ENCODE measurements at regions of chr14 and their contacts with region 1.

Region 1: DNA sequence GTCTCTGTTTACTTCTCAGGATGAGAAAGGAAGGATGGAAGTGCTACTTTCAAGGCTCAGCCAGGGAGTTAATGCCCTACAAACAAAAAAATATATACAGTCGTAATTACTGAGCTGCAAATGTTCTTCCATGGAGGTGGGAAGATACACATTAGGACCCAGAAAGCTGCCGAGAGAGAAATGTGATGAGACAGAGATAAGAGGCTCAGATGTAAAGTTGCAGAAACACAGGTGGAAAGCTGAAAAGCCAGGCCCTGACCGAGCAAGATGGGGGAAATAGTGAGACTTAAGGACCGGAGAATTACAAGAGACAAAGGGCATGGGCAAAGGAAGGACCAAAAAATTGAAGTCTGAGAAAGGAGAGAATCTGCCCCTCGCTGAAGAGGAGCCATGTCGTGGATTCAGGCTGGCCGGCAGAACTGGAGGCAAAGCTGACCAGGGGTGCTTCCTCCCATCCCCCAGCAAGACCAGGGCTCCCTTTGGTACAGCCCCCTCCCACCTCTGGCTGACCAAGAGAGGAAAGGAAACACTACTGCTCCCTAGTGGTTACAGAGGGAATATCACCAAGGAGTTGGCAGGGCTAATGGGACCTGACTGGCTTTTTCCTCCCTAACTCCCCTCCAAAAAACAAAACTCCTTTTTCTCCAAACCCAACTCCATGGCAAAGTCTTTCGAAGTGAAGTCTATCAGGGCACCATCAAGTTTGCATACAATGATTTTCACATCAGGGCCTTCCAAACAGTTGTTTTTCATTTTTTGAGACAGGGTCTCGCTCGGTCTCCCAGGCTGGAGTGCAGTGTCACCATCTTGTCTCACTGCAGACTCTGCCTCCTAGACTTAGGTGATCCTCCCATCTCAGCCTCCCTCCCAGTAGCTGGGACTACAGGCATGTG is 12.1 kb downstream of the ZFHX2 start:
- DNase-seq: no peak
- ATAC-seq: peak; percentile 58 to 75
- H3K4me3 ChIP-seq: no peak overlapping the region
- H3K27ac ChIP-seq: no peak overlapping the region
- H3K4me1 ChIP-seq: no peaks in the 10 kb centered on the region
- H3K27me3 ChIP-seq: no peaks in the 10 kb centered on the region
- CTCF ChIP-seq: peak; percentile 33 to 74 (median 53)
- POLR2A ChIP-seq: no peak

Region 2: DNA sequence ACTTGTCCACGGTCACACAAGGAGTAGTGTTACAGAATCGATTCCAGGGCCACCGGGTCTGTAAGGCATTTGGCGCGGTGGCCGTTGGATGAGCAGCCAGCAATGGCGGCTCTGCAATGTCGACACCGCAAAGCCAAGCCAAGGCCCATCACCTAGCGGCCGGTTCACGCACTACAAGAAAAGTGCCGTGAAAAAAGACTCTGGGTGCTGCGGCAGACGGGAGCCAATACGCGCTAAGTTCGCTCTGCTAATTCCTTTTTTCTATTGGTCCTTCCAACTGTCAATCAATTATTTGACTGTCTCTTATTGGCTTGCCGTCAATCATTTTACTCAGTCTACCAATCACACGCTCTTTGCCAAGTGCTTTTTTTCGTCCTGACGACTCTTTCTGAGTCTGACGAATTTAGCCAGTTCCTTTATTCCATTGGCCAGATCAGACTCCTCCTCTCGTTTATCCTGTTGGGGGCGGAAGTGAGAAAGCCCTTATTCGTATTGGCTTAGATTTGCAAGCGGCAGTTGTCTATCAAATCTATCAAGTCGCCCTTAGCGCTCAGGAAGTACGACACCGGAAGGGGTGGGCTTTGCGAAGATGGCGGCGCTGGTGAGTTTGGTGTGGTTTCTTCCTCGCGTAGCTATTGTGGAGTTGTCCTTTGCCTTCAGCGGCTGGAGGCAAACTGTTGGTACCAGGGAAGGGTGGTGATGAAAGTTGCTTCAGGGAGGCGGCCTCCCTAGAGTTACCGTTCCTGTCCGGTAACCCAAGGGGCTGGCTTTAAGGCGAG is 70.2 kb before region 1 on chr14 and contains the start of gene NGDN:
- in situ Hi-C with region 1: loop called in 1 of 4 experiments (anchors 5 kb)
- intact Hi-C with region 1: no loop called
- DNase-seq: peak; percentile 96 to 97
- ATAC-seq: peak; percentile 98 to 99
- H3K4me3 ChIP-seq: peak within 1 kb of the TSS; percentile 74 to 98 (median 88)
- H3K27ac ChIP-seq: peak within 1 kb of the TSS; percentile 82 to 89 (median 86)
- H3K4me1 ChIP-seq: peaks cover 12% of the 10 kb centered on the region in 2 donors
- H3K27me3 ChIP-seq: no peaks in the 10 kb centered on the region
- CTCF ChIP-seq: peak; percentile 88 to 97 (median 95)
- POLR2A ChIP-seq: peak; percentile 44 to 73
- total RNA-seq, gene NGDN: 27.9 to 41.9 (median 36.1) TPM

Region 3: DNA sequence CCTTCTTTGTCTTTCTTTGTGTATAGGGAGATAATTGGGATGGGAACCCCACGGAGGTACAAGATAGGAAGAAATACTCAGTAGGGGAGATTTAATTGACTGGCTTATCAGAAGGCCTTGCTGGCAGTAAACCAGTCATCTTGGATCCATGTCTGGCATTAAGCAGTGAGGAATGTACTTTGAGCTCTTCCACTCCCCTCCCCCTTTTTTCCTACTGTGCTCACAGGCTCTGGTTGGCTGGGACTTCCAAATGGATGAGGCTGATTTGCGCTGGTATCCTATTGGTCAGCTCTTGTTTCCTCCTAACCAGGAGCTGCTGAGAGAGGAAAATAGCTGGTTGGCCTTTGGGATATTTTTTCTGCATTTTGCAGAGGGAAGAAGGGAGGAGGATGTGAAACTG is 45.3 kb before region 1 on chr14:
- in situ Hi-C with region 1: loop called in 1 of 4 experiments (anchors 10 kb)
- intact Hi-C with region 1: no loop called
- DNase-seq: no peak
- ATAC-seq: no peak
- H3K4me3 ChIP-seq: no peak overlapping the region
- H3K27ac ChIP-seq: no peak overlapping the region
- H3K4me1 ChIP-seq: no peaks in the 10 kb centered on the region
- H3K27me3 ChIP-seq: no peaks in the 10 kb centered on the region
- CTCF ChIP-seq: no peak
- POLR2A ChIP-seq: no peak